HEK293 (cell line): ENCODE measurements at regions of chr12 and their contacts with region 1.

Region 1: GRCh38 chr12:54280468-54281260 is at the start of gene HNRNPA1:
- H3K4me3 ChIP-seq: peak within 1 kb of the TSS; percentile 99
- H3K27ac ChIP-seq: peak within 1 kb of the TSS; percentile 94
- H3K4me1 ChIP-seq: peaks cover 5% of the 10 kb centered on the region
- CTCF ChIP-seq: no peak; the same call in 1 of the 2 replicates

Region 2: GRCh38 chr12:53543539-53543938 is 737.1 kb before region 1 on chr12:
- CTCF ChIA-PET with region 1: no interaction called
- POLR2A ChIA-PET with region 1: no interaction called
- H3K4me3 ChIP-seq: no peak overlapping the region
- H3K27ac ChIP-seq: no peak overlapping the region; the same call in 1 of the 2 replicates
- H3K4me1 ChIP-seq: peaks cover 9% of the 10 kb centered on the region
- CTCF ChIP-seq: peak; percentile 88

Region 3: GRCh38 chr12:54229624-54230212 is 50.9 kb before region 1 on chr12:
- CTCF ChIA-PET with region 1: no interaction called
- POLR2A ChIA-PET with region 1: interaction called, 10 read pairs
- H3K4me3 ChIP-seq: no peak overlapping the region
- H3K27ac ChIP-seq: no peak overlapping the region
- H3K4me1 ChIP-seq: no peaks in the 10 kb centered on the region; the same call in 1 of the 2 replicates
- CTCF ChIP-seq: no peak

Region 4: GRCh38 chr12:54259194-54260011 is 21.3 kb before region 1 on chr12:
- CTCF ChIA-PET with region 1: interaction called, 6 read pairs
- POLR2A ChIA-PET with region 1: interaction called, 113 read pairs
- H3K4me3 ChIP-seq: peak overlapping the region; percentile 45
- H3K27ac ChIP-seq: peak overlapping the region; percentile 66
- H3K4me1 ChIP-seq: peaks cover 31% of the 10 kb centered on the region
- CTCF ChIP-seq: no peak

Region 5: GRCh38 chr12:54300732-54301427 is 20.2 kb after region 1 on chr12 and contains the start of gene NFE2:
- CTCF ChIA-PET with region 1: interaction called, 9 read pairs
- POLR2A ChIA-PET with region 1: interaction called, 25 read pairs
- H3K4me3 ChIP-seq: peak within 1 kb of the TSS; percentile 25
- H3K27ac ChIP-seq: no peak within 1 kb of the TSS; the same call in 1 of the 2 replicates
- H3K4me1 ChIP-seq: peaks cover 6% of the 10 kb centered on the region
- CTCF ChIP-seq: peak; percentile 45; the same call in 1 of the 2 replicates

Region 6: DNA sequence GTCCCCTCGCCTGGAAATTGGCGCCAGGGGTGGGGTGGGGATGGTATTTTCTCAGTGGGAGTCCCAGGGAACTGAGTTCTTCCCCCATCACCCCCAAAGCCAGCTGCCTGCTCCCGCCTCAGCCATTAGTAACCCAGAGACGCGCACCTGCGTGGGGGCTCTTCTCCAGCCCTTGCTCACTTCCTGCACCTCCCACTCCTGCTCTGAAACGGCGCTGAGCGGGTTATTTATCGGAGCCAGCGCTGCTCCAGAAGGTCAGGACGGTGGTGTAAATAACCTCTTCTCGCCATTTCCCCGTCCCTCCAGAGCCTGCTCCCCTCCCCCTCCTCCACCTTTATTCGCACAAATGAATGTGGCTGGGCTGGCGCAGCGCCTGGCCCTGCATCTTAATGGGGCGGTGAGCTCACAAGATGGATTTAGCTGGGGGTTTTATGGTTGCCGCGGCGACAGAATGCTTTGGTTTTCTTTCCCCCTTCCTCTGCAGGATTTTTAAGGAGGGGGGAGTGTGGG is 71.4 kb after region 1 on chr12:
- CTCF ChIA-PET with region 1: no interaction called
- POLR2A ChIA-PET with region 1: interaction called, 10 read pairs
- H3K4me3 ChIP-seq: no peak overlapping the region
- H3K27ac ChIP-seq: peak overlapping the region; percentile 71
- H3K4me1 ChIP-seq: peaks cover 18% of the 10 kb centered on the region
- CTCF ChIP-seq: no peak

Region 7: DNA sequence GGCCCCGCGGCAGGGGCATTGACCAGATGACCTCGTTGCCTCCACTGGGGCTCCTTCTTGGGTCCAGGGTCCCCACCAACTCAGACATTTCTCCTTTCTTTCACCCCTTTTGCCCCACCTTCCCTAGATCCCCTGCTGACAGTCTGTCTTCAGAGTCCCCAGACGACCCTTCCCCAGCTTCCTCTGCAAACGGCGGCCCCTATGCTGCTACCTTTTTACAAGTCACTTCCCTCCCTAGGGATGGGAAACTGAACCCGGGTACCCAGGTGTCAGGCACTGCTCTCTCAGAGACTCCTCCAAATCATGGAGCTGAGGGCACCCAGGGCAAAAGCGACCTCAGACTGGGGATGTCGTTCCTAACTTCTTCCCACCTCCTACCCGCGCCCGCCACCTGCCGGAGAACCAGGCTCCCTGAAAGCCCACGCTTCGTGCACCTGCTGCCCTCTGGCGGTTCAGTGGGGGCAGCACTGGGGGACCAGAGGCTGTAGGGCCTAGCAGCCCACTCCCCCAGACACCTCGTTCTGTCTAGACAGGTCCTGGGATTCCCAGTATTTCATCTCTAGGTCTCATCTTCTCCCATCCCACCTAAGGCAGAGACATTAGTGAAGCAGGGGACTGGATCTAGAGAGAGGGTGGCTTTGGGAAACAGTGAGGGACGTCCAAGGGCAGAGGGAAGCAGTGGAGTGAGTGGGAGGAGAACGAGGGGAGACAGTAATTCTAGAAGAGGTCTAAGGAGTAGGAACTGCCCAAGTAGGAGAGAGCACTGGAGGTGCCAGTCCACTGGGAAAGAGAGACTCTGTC is 98.9 kb after region 1 on chr12:
- CTCF ChIA-PET with region 1: interaction called, 4 read pairs
- POLR2A ChIA-PET with region 1: interaction called, 16 read pairs
- H3K4me3 ChIP-seq: peak overlapping the region; percentile 42
- H3K27ac ChIP-seq: no peak overlapping the region; the same call in 1 of the 2 replicates
- H3K4me1 ChIP-seq: peaks cover 6% of the 10 kb centered on the region
- CTCF ChIP-seq: peak; percentile 100